Endothelial cell of umbilical vein (primary cell): ENCODE measurements at regions of chr3 and their contacts with region 1.

Region 1: GRCh38 chr3:129016356-129016719 is 15.2 kb downstream of the EFCC1 start:
- DNase-seq: peak; percentile 45
- H3K4me3 ChIP-seq: peak overlapping the region in 1 of 3 experiments; percentile 2
- H3K27ac ChIP-seq: peak overlapping the region; percentile 86
- H3K4me1 ChIP-seq: peaks cover 33% of the 10 kb centered on the region
- H3K27me3 ChIP-seq: no peaks in the 10 kb centered on the region
- CTCF ChIP-seq: no peak
- POLR2A ChIP-seq: no peak

Region 2: DNA sequence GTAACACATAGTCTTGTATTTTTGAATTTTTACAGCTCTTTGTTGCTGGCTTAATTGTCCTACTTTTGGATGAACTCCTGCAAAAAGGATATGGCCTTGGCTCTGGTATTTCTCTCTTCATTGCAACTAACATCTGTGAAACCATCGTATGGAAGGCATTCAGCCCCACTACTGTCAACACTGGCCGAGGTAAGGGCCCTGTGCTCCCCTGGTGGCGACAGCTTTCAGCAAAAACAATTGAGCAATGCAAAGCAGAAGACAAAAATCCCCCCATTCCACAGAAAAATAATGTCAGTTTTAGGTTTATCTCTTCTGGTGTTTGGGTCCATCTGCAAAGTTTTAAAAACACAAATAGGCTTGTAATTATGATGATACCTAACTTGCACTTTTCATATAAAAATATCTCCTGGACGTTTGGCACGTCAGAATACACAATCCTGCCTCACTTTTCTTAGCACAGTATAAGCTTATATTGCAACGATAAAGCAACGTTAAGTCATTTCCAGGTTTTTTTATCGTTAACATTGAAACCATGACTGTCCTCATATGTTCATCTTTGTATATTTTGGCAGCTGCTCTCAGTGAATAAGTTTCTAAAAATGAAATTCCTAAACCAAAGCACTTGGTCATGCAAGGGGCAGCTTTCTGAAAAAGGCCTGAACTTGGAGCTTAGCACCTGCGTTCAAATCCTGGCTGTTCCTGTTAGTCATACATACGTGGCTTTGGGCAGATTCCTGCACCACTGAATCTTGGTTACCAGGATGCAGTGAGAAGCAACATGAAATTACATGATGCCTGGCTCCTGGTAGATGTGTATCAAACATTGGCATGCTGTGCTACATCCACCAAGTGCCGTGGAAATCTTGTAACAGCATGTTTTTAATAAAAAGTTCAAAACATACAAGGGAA is 955.6 kb before region 1 on chr3:
- CTCF ChIA-PET with region 1: no interaction called
- POLR2A ChIA-PET with region 1: no interaction called
- dilution Hi-C with region 1: no loop called
- intact Hi-C with region 1: no loop called
- DNase-seq: peak; percentile 15
- H3K4me3 ChIP-seq: no peak overlapping the region
- H3K27ac ChIP-seq: no peak overlapping the region
- H3K4me1 ChIP-seq: peaks cover 7% of the 10 kb centered on the region
- H3K27me3 ChIP-seq: no peaks in the 10 kb centered on the region
- CTCF ChIP-seq: no peak
- POLR2A ChIP-seq: no peak

Region 3: GRCh38 chr3:128993461-128994173 is 22.7 kb before region 1 on chr3 and contains the start of gene CFAP92:
- CTCF ChIA-PET with region 1: interaction called, 16 read pairs
- POLR2A ChIA-PET with region 1: interaction called, 5 read pairs
- dilution Hi-C with region 1: no loop called
- intact Hi-C with region 1: no loop called
- DNase-seq: no peak
- H3K4me3 ChIP-seq: peak within 1 kb of the TSS in 2 of 3 experiments; percentile 1 to 39
- H3K27ac ChIP-seq: no peak within 1 kb of the TSS
- H3K4me1 ChIP-seq: peaks cover 6% of the 10 kb centered on the region
- H3K27me3 ChIP-seq: peaks cover 0 to 10% of the 10 kb centered on the region in 2 experiments
- CTCF ChIP-seq: no peak
- POLR2A ChIP-seq: no peak
- total RNA-seq, gene CFAP92: 0.21 and 0.62 TPM in 2 replicates

Region 4: GRCh38 chr3:129003578-129004160 is 12.7 kb before region 1 on chr3:
- CTCF ChIA-PET with region 1: interaction called, 26 read pairs
- POLR2A ChIA-PET with region 1: interaction called, 9 read pairs
- dilution Hi-C with region 1: no loop called
- intact Hi-C with region 1: loop called (anchors 1 kb)
- DNase-seq: no peak
- H3K4me3 ChIP-seq: no peak overlapping the region
- H3K27ac ChIP-seq: no peak overlapping the region
- H3K4me1 ChIP-seq: peaks cover 15% of the 10 kb centered on the region
- H3K27me3 ChIP-seq: peaks cover 26 to 44% of the 10 kb centered on the region in 2 experiments
- CTCF ChIP-seq: peak in 1 of 2 donors; percentile 12
- POLR2A ChIP-seq: no peak

Region 5: DNA sequence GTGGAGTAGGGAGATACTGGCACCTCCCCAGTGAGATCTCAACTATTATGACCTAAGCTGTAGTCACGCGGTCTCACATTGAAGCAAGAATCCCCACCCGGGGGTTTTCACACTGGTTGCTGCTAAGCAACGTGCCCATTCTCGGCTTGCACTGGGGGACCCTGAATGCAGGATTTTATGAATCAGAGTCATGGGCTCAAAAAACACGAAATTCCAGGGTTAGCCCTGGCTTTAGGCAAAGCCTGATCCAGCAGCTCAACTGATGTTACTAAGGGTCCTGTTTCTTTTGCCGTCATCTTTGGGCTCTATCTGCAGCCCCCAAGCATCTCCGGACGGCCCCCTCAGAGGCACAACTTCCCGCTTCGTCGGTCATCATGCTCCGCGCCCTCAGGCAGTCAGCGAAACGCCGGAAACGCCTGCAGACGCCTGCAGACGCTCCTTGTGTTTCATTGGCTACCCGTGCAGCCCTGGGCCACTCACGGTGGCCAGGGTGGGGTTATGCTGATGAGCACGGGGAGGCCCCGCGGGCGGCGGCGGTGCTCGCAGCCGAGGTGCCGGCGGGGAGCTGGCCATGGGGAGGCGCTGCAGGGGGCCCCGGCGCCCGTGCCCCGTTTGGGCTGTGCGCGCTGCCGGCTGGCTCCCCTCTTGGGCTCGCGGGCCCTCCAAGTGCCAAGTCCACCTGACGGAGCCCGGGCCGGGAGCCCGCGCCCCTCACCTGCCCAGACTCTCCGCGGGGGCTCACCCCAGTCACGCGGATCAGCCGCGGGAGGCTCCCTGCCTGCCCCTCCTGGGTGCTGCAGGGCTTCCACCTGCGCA is 10.6 kb after region 1 on chr3:
- CTCF ChIA-PET with region 1: interaction called, 49 read pairs
- POLR2A ChIA-PET with region 1: no interaction called
- dilution Hi-C with region 1: no loop called
- intact Hi-C with region 1: loop called (anchors 1 kb)
- DNase-seq: peak; percentile 91
- H3K4me3 ChIP-seq: peak overlapping the region; percentile 30 to 49 (median 45)
- H3K27ac ChIP-seq: no peak overlapping the region
- H3K4me1 ChIP-seq: peaks cover 10% of the 10 kb centered on the region
- H3K27me3 ChIP-seq: no peaks in the 10 kb centered on the region
- CTCF ChIP-seq: peak; percentile 70 to 86
- POLR2A ChIP-seq: peak; percentile 43

Region 6: GRCh38 chr3:129526121-129526900 is 510.0 kb after region 1 on chr3:
- CTCF ChIA-PET with region 1: no interaction called
- POLR2A ChIA-PET with region 1: no interaction called
- dilution Hi-C with region 1: no loop called
- intact Hi-C with region 1: no loop called
- DNase-seq: no peak
- H3K4me3 ChIP-seq: no peak overlapping the region
- H3K27ac ChIP-seq: no peak overlapping the region
- H3K4me1 ChIP-seq: peaks cover 11% of the 10 kb centered on the region
- H3K27me3 ChIP-seq: no peaks in the 10 kb centered on the region
- CTCF ChIP-seq: no peak
- POLR2A ChIP-seq: no peak